ENCODE measurements at regions of chr20 and their contacts with region 1.

Region 1: GRCh38 chr20:41232973-41233926 is 84.3 kb downstream of the ZHX3 start:
- DNase-seq: no peak
- H3K4me3 Mint-ChIP-seq: no peak overlapping the region
- H3K27ac Mint-ChIP-seq: no peak overlapping the region
- H3K4me1 Mint-ChIP-seq: peaks cover 24% of the 10 kb centered on the region
- H3K27me3 Mint-ChIP-seq: no peaks in the 10 kb centered on the region

Region 2: DNA sequence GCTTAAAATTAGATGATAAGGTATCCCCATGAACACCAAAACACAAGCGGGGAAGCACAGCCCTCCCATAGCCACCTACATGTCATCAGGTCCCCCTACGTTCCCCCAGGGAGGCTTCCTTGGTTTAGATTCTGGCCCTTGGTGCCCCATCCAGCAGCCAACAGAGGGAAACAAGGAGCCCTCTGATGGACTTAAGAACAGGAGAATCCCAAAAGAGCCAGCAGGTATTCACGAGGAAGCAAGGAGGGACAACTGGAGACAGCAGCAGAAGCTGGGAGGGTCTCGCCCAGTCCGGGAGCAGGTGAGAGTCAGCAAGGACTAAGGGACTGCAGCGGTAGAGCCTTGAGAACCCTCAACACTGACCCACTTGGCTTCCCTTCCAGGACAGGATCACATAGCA is 263.0 kb before region 1 on chr20:
- CTCF ChIA-PET with region 1: interaction called, 15 read pairs
- POLR2A ChIA-PET with region 1: no interaction called
- DNase-seq: no peak
- H3K4me3 Mint-ChIP-seq: no peak overlapping the region
- H3K27ac Mint-ChIP-seq: no peak overlapping the region
- H3K4me1 Mint-ChIP-seq: peaks cover 12% of the 10 kb centered on the region
- H3K27me3 Mint-ChIP-seq: peaks cover 40% of the 10 kb centered on the region

Region 3: DNA sequence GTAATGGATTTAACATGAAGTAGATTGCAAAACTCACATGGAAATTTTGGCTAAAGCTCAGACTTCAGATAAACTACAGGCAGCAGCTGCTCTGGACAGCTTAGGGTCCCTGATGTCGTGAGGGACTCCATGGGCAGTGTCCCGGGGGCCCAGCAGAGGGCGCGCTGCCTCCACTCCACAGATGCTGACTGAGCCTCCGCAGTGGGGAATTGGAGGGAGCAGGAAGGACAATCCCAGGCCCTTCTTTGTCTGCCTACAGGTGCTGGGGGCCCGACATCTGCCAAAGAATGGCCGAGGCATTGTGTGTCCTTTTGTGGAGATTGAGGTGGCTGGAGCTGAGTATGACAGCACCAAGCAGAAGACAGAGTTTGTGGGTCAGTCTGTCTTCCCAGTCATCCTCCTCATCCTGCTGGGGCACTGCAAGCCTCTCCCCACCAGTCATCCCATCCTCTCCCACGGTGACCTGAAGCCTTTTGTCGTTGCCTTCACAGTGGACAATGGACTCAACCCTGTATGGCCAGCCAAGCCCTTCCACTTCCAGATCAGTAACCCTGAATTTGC is 60.0 kb before region 1 on chr20:
- CTCF ChIA-PET with region 1: interaction called, 20 read pairs
- POLR2A ChIA-PET with region 1: no interaction called
- DNase-seq: peak; percentile 60
- H3K4me3 Mint-ChIP-seq: no peak overlapping the region
- H3K27ac Mint-ChIP-seq: peak overlapping the region; percentile 35
- H3K4me1 Mint-ChIP-seq: peaks cover 12% of the 10 kb centered on the region
- H3K27me3 Mint-ChIP-seq: no peaks in the 10 kb centered on the region

Region 4: DNA sequence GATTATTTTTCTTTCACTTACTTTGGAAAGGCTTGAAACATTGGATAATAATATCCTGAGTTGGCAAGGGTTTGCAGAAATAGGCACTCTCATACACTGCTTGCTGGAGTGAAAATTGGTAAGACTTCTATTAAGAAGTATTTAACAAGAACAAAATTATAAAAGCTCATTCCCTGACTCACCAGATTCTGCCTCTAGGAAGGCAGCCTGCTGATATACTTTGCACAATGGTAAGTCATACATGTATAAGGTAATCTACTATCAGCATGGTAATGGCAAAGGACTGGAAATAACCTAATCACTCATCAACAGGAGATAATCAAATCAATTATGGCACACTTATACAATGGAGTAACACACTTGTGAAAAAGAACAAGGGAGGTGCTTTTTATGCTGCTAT is 10.1 kb before region 1 on chr20:
- CTCF ChIA-PET with region 1: interaction called, 13 read pairs
- POLR2A ChIA-PET with region 1: no interaction called
- DNase-seq: no peak
- H3K4me3 Mint-ChIP-seq: no peak overlapping the region
- H3K27ac Mint-ChIP-seq: no peak overlapping the region
- H3K4me1 Mint-ChIP-seq: no peaks in the 10 kb centered on the region
- H3K27me3 Mint-ChIP-seq: no peaks in the 10 kb centered on the region

Region 5: GRCh38 chr20:41339507-41340326 is 106.5 kb after region 1 on chr20:
- CTCF ChIA-PET with region 1: interaction called, 18 read pairs
- POLR2A ChIA-PET with region 1: no interaction called
- DNase-seq: peak; percentile 86
- H3K4me3 Mint-ChIP-seq: peak overlapping the region; percentile 62
- H3K27ac Mint-ChIP-seq: no peak overlapping the region
- H3K4me1 Mint-ChIP-seq: peaks cover 12% of the 10 kb centered on the region
- H3K27me3 Mint-ChIP-seq: peaks cover 5% of the 10 kb centered on the region

Measured in activated CD4-positive, alpha-beta memory T cell treated with anti-CD3 and anti-CD28 coated beads, Interleukin-2, amount 10 ng/mL, durations not matched to agents 7 days and 5 days (primary cell).